Head of caudate nucleus (tissue), 42 donors: ENCODE measurements at regions of chr14 and their contacts with region 1.

Region 1: GRCh38 chr14:59126710-59127432 is 61.6 kb upstream of the DAAM1 start:
- DNase-seq: peak in 23 of 42 donors; percentile 14 to 67 (median 39)

Region 2: DNA sequence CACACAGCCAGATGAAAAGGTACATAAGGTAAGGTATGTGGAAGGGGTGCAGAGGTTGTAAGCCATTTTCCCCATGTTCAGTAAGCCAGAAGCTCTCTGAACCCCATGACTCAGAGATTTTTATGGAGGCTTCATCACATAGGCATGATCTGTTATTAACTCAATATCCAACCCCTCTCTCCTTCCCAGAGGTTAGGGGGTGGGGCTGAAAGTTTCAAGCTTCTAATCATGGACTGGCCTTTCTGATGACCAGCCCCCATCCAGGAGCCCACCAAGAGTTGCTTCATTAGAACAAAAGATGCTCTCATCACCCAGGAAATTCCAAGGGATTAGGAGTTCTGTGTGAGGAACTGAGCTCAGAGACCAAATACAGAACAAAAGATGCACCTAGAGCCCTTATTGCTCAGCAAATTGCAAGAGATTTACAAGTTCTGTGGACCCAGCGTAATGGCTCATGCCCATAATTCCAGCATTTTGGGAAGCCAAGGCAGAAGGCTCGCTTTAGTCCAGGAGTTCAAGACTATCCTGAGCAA is 41.6 kb before region 1 on chr14:
- intact Hi-C with region 1: no loop called
- DNase-seq: no peak

Region 3: DNA sequence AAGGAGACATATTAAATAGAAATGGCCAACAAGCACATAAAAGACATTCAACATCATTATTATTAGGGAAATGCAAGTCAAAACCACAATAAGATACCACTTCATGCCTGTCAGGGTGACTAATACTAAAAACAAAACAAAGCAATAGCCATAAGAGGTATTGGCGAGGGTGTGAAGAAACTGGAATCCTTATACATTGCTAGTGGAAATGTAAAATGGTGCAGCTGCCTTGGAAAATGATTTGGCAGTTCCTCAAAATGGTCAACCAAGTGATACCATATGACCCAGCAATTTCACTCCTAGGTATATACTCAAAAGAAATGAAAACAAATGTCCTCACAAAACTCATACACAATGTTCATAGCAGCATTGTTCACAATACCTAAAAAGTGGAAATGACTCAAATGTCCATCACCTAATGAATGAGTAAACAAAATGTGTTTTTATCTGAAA is 311.4 kb after region 1 on chr14:
- intact Hi-C with region 1: loop called (anchors 5 kb)
- DNase-seq: no peak

Region 4: DNA sequence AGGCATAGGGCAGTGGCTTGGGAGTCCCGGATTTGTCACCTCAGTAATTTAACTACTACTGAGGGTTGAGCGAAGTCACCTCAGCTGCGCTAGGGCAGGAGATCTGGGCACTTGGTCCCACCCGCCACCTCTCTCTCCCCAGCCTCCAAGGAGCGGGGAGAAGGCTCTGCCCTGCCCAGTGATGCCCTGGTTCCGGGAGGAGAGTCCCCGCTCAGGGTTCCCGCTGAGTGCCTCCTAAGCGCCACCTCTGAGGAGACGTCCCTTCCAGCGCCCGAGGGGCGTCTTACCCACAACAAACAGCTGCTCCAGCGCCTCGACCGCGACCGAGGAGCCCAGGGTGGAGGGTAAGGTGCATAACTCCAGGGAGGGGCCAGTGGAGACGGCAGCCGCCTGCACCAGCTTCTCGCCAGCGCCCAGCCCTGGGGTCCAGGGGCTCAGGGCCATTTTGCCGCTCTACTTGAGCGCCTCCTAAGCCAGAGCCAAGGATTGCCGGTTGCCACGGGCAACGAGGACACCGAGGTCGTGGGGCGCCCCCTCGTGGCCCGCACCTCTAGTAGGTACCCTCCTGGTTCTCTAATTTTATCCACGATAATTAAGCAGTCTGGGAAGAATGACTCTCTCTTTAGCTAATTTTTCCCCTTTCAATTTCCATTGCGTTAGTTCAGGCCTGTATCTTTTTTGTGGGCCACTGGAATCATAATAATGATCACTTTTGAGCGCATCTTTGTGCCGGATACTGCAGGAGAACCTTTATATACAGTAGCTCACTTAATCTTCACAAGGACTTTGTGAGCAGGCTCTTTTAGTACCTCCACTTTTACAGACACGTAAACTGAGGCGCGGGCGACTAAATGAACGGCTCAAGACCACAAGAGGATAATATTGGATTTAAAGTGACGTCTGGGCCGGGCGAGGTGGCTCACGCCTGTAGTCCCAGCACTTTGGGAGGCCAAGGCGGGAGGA is 449.7 kb after region 1 on chr14 and contains the start of gene CCDC175:
- intact Hi-C with region 1: loop called (anchors 10 kb)
- DNase-seq: peak; percentile 79 to 95 (median 91)